Activated CD4-positive, alpha-beta T cell treated with anti-CD3 and anti-CD28 coated beads for 36 hours (primary cell): ENCODE measurements at regions of chr5 and their contacts with region 1.

Region 1: GRCh38 chr5:138542956-138543729 is at the start of gene ETF1:
- DNase-seq: peak; percentile 100
- ATAC-seq: peak; percentile 94
- H3K4me3 Mint-ChIP-seq: peak within 1 kb of the TSS; percentile 100
- H3K27ac Mint-ChIP-seq: peak within 1 kb of the TSS; percentile 100
- H3K4me1 Mint-ChIP-seq: peaks cover 67% of the 10 kb centered on the region
- H3K27me3 Mint-ChIP-seq: no peaks in the 10 kb centered on the region
- total RNA-seq, gene ETF1: 140 to 156 TPM

Region 2: DNA sequence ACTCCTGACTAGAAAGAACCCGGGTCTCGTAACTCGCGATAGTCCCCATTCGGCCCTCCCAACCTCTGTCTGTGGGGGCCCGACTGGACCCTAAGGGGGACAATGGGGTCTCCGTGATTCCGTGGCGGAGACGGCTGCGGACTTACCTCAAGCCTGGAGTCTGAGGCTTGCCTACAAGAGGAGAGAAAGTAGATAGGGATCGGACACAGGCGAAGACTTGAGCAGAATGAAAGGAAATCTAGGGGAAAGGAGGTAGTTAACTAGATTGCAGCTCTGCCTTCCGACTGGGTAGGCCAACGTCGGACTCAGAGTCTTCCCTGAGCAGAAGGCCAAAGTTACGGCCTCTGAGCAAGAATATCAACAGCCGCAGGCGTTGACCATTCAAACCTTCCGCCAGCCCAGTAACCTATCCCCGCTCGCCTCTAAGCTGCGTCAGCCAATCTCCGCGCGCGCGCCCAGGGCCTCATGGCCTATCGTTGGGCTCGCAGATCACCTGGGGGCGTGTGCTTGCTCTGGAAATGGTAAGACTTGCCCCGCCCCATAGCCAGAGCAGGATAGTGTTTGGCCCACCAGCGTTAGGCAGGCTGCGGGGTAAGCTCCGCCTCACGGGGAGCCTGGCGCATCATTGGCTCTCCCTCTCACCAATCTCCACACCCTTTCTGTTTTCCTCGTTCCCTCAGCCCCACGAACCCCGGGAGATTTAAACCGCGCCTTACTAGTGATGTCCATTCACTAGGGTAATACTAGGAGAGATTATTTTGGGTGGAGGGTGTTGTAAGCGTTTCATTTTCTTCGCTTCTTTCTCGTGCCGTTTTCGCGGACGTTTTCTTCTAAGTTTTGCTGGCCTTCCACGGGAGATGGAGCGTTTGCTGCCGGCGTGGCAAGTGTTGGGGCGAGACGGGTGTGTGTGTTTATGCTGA is 211.4 kb before region 1 on chr5 and contains the start of gene CDC25C:
- CTCF ChIA-PET with region 1: no interaction called
- POLR2A ChIA-PET with region 1: no interaction called
- intact Hi-C with region 1: loop called in 1 of 2 experiments (anchors 1 kb)
- DNase-seq: peak; percentile 98
- ATAC-seq: peak; percentile 100
- H3K4me3 Mint-ChIP-seq: peak within 1 kb of the TSS; percentile 86
- H3K27ac Mint-ChIP-seq: peak within 1 kb of the TSS; percentile 87
- H3K4me1 Mint-ChIP-seq: peaks cover 22% of the 10 kb centered on the region
- H3K27me3 Mint-ChIP-seq: no peaks in the 10 kb centered on the region
- total RNA-seq, gene CDC25C: 15.9 to 19.0 TPM

Region 3: GRCh38 chr5:138352071-138352721 is 190.9 kb before region 1 on chr5 and contains the start of gene KDM3B:
- CTCF ChIA-PET with region 1: interaction called, 6 read pairs
- POLR2A ChIA-PET with region 1: interaction called, 13 read pairs
- intact Hi-C with region 1: loop called in 1 of 2 experiments (anchors 1 kb)
- DNase-seq: peak; percentile 94
- ATAC-seq: peak; percentile 76
- H3K4me3 Mint-ChIP-seq: peak within 1 kb of the TSS; percentile 99
- H3K27ac Mint-ChIP-seq: peak within 1 kb of the TSS; percentile 96
- H3K4me1 Mint-ChIP-seq: peaks cover 44% of the 10 kb centered on the region
- H3K27me3 Mint-ChIP-seq: no peaks in the 10 kb centered on the region
- total RNA-seq, gene KDM3B: 39.0 to 40.9 TPM

Region 4: GRCh38 chr5:138559937-138560336 is 16.8 kb after region 1 on chr5:
- CTCF ChIA-PET with region 1: interaction called, 10 read pairs
- POLR2A ChIA-PET with region 1: interaction called, 3 read pairs
- intact Hi-C with region 1: no loop called
- DNase-seq: no peak
- ATAC-seq: no peak
- H3K4me3 Mint-ChIP-seq: no peak overlapping the region
- H3K27ac Mint-ChIP-seq: no peak overlapping the region
- H3K4me1 Mint-ChIP-seq: peaks cover 28% of the 10 kb centered on the region
- H3K27me3 Mint-ChIP-seq: no peaks in the 10 kb centered on the region

Region 5: GRCh38 chr5:138752951-138753793 is 210.0 kb after region 1 on chr5 and contains the start of gene CTNNA1:
- CTCF ChIA-PET with region 1: no interaction called
- POLR2A ChIA-PET with region 1: no interaction called
- intact Hi-C with region 1: loop called in 1 of 2 experiments (anchors 1 kb)
- DNase-seq: peak; percentile 77
- ATAC-seq: peak; percentile 60
- H3K4me3 Mint-ChIP-seq: peak within 1 kb of the TSS; percentile 73
- H3K27ac Mint-ChIP-seq: peak within 1 kb of the TSS; percentile 49
- H3K4me1 Mint-ChIP-seq: peaks cover 30% of the 10 kb centered on the region
- H3K27me3 Mint-ChIP-seq: peaks cover 30% of the 10 kb centered on the region
- total RNA-seq, gene CTNNA1: 78.8 to 86.7 TPM

Region 6: GRCh38 chr5:139293504-139294373 is 750.6 kb after region 1 on chr5 and contains the start of gene MATR3:
- CTCF ChIA-PET with region 1: no interaction called
- POLR2A ChIA-PET with region 1: no interaction called
- intact Hi-C with region 1: loop called in 1 of 2 experiments (anchors 1 kb)
- DNase-seq: peak; percentile 98
- ATAC-seq: peak; percentile 92
- H3K4me3 Mint-ChIP-seq: peak within 1 kb of the TSS; percentile 97
- H3K27ac Mint-ChIP-seq: peak within 1 kb of the TSS; percentile 99
- H3K4me1 Mint-ChIP-seq: peaks cover 37% of the 10 kb centered on the region
- H3K27me3 Mint-ChIP-seq: no peaks in the 10 kb centered on the region
- total RNA-seq, gene MATR3: 113 to 133 TPM